Natural killer cell (primary cell): ENCODE measurements at regions of chr18 and their contacts with region 1.

Region 1: DNA sequence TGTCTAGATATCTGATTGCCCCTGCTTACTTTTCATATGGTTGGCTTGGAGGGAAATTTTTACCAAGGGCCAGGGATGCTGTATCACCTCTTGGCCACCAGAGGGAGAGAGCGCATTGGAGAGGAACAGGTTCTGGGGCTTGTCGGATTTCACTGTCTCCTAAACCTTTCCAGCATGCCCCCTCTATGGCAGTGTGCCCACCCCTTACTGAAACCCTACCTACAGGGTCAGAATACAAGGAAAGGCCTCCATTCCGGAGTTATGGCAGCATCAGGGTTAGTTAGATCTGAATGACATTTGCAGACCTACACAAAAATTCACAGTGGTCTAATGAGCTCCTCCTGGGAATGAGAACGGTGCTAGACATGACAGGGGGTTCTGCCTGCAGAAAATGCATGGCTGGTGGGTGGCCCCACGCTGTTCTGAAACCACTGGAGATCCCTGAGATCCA is 5.8 kb downstream of the SLC14A2 start:
- DNase-seq: peak; percentile 18 to 69
- ATAC-seq: peak; percentile 61 to 84 (median 76)
- H3K4me3 ChIP-seq: no peak overlapping the region
- H3K4me3 Mint-ChIP-seq: no peak overlapping the region
- H3K27ac ChIP-seq: no peak overlapping the region
- H3K27ac Mint-ChIP-seq: no peak overlapping the region
- H3K4me1 ChIP-seq: no peaks in the 10 kb centered on the region
- H3K4me1 Mint-ChIP-seq: peaks cover 0 to 6% of the 10 kb centered on the region in 2 donors
- H3K27me3 ChIP-seq: no peaks in the 10 kb centered on the region
- H3K27me3 Mint-ChIP-seq: peaks cover 17 to 23% of the 10 kb centered on the region in 2 donors
- CTCF ChIP-seq: peak; percentile 94

Region 2: DNA sequence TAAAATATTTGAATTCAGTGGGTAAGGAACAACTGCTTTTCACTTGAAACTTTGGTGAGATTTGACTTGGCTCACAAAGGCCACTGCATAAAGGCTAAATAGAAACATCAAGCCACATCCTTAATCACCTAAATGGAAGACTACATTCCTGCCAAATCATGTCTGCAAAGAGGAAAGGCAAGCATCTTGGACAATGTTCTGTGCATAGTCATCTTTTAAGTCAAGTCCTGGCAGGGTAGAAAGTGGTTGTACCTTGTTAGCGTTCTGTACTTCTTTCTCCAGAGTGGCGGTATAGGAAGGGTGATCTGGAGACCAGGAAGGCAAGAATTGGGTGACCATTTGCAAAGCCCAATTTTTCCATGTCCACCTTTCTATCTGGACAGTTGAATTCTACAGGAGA is 127.3 kb before region 1 on chr18:
- intact Hi-C with region 1: no loop called
- DNase-seq: no peak
- ATAC-seq: no peak
- H3K4me3 ChIP-seq: no peak overlapping the region
- H3K4me3 Mint-ChIP-seq: no peak overlapping the region
- H3K27ac ChIP-seq: no peak overlapping the region
- H3K27ac Mint-ChIP-seq: no peak overlapping the region
- H3K4me1 ChIP-seq: no peaks in the 10 kb centered on the region
- H3K4me1 Mint-ChIP-seq: no peaks in the 10 kb centered on the region
- H3K27me3 ChIP-seq: no peaks in the 10 kb centered on the region
- H3K27me3 Mint-ChIP-seq: peaks cover 0 to 13% of the 10 kb centered on the region in 2 donors
- CTCF ChIP-seq: no peak

Region 3: GRCh38 chr18:45910405-45911023 is 289.4 kb after region 1 on chr18:
- intact Hi-C with region 1: loop called (anchors 2 kb)
- DNase-seq: peak; percentile 44 to 75
- ATAC-seq: peak; percentile 82 to 94 (median 83)
- H3K4me3 ChIP-seq: no peak overlapping the region
- H3K4me3 Mint-ChIP-seq: no peak overlapping the region
- H3K27ac ChIP-seq: no peak overlapping the region
- H3K27ac Mint-ChIP-seq: peak overlapping the region in 1 of 2 donors; percentile 34
- H3K4me1 ChIP-seq: no peaks in the 10 kb centered on the region
- H3K4me1 Mint-ChIP-seq: peaks cover 0 to 5% of the 10 kb centered on the region in 2 donors
- H3K27me3 ChIP-seq: no peaks in the 10 kb centered on the region
- H3K27me3 Mint-ChIP-seq: no peaks in the 10 kb centered on the region
- CTCF ChIP-seq: peak; percentile 82